Esophagus squamous epithelium (tissue), 5 donors: ENCODE measurements at regions of chr9 and their contacts with region 1.

Region 1: GRCh38 chr9:129177791-129178559 is at the start of gene IER5L:
- DNase-seq: peak; percentile 76
- H3K4me3 ChIP-seq: peak within 1 kb of the TSS; percentile 75 to 83 (median 82)
- H3K27ac ChIP-seq: peak within 1 kb of the TSS; percentile 96 to 100 (median 98)
- H3K4me1 ChIP-seq: peaks cover 21 to 46% (median 25%) of the 10 kb centered on the region in 3 donors
- H3K27me3 ChIP-seq: peaks cover 0 to 5% (median 0%) of the 10 kb centered on the region in 4 donors
- CTCF ChIP-seq: peak in 2 of 6 experiments; percentile 12 to 19
- POLR2A ChIP-seq: peak in 3 of 4 donors; percentile 64 to 98 (median 95)
- total RNA-seq, gene IER5L: 6.1 to 8.7 (median 7.2) TPM

Region 2: GRCh38 chr9:129139993-129140396 is 38.0 kb before region 1 on chr9:
- intact Hi-C with region 1: loop called (anchors 5 kb)
- DNase-seq: peak; percentile 81
- H3K4me3 ChIP-seq: peak overlapping the region; percentile 32 to 63 (median 46)
- H3K27ac ChIP-seq: peak overlapping the region; percentile 97 to 99 (median 99)
- H3K4me1 ChIP-seq: peaks cover 57 to 79% (median 63%) of the 10 kb centered on the region in 3 donors
- H3K27me3 ChIP-seq: no peaks in the 10 kb centered on the region
- CTCF ChIP-seq: peak in 1 of 6 experiments; percentile 16
- POLR2A ChIP-seq: peak in 2 of 4 donors; percentile 14 to 65

Region 3: DNA sequence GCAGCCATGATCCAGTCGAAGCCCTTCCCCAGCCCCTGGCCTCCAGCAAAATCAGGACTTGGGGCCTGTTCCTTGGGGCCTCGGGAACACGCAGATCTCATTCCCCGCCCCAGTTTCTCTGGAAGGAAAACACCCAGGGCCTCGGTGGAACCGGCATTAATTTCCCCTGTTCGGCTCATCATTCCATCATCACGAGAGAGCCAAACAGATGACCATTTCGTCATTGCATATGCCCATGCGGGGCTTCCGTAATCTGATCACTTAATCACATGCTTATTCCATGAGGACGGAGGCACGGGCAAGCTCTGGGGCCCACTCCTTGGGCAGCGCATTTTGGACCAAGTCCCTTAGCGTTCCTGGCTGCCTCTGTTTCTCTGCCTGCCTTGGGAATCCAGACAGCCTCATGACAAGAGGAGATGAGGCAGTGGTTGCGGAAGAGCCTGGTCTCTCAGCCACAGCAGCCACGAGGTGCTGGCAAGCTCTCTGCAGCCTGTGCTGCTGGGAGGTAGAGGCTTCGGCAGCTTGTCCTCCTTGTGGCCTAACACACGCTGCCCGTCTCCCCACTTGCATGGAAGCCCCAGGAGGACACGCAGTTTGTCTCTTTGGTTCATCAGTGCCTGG is 65.1 kb after region 1 on chr9:
- intact Hi-C with region 1: no loop called
- DNase-seq: no peak
- H3K4me3 ChIP-seq: no peak overlapping the region
- H3K27ac ChIP-seq: peak overlapping the region in 3 of 4 donors; percentile 44 to 74 (median 60)
- H3K4me1 ChIP-seq: no peaks in the 10 kb centered on the region
- H3K27me3 ChIP-seq: no peaks in the 10 kb centered on the region
- CTCF ChIP-seq: no peak
- POLR2A ChIP-seq: peak in 1 of 4 donors; percentile 11

Region 4: GRCh38 chr9:129495534-129496325 is 317.8 kb after region 1 on chr9:
- intact Hi-C with region 1: loop called (anchors 2 kb)
- DNase-seq: peak; percentile 40
- H3K4me3 ChIP-seq: peak overlapping the region; percentile 50 to 77 (median 61)
- H3K27ac ChIP-seq: peak overlapping the region; percentile 95 to 98 (median 96)
- H3K4me1 ChIP-seq: peaks cover 50 to 100% (median 56%) of the 10 kb centered on the region in 3 donors
- H3K27me3 ChIP-seq: no peaks in the 10 kb centered on the region
- CTCF ChIP-seq: no peak
- POLR2A ChIP-seq: peak in 1 of 4 donors; percentile 14